ENCODE measurements at regions of chr17 and their contacts with region 1.

Region 1: GRCh38 chr17:38485146-38485468 is 56.8 kb downstream of the ARHGAP23 start:
- DNase-seq: no peak
- H3K4me3 ChIP-seq: no peak overlapping the region
- H3K27ac ChIP-seq: no peak overlapping the region
- H3K4me1 ChIP-seq: peaks cover 7% of the 10 kb centered on the region
- H3K27me3 ChIP-seq: no peaks in the 10 kb centered on the region
- CTCF ChIP-seq: no peak

Region 2: GRCh38 chr17:38421871-38422827 is 63.0 kb before region 1 on chr17:
- CTCF ChIA-PET with region 1: no interaction called
- dilution Hi-C with region 1: no loop called
- in situ Hi-C with region 1: loop called in 1 of 2 experiments (anchors 10 kb)
- intact Hi-C with region 1: loop called (anchors 2 kb)
- DNase-seq: no peak
- H3K4me3 ChIP-seq: no peak overlapping the region
- H3K27ac ChIP-seq: no peak overlapping the region
- H3K4me1 ChIP-seq: no peaks in the 10 kb centered on the region
- H3K27me3 ChIP-seq: peaks cover 15% of the 10 kb centered on the region
- CTCF ChIP-seq: no peak

Region 3: DNA sequence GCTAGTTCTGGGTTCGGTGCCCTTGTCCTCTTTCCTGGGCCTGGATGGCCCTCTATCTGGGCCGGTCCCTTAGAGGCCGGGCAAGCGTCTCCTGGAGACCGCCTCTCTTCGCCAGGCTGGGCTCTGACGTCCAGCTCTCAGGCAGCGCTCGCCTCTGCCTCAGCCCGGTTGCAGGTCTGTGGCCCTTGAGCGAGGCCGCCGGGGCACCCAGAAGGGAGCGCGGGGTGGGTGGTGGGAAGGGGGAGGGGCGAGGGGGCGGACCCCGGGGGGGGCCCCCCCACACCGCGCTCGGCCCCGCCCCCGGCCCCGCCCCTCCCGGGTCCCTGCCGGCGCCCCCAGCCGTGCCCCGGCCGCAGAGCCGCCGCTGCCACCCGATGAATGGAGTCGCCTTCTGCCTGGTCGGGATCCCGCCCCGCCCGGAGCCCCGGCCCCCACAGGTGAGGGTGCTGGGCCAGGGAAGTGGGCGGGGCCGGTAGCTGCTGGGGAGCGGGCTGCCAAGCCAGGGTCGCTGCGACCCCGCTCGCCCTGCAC is 56.9 kb before region 1 on chr17 and contains the start of gene ARHGAP23:
- CTCF ChIA-PET with region 1: no interaction called
- dilution Hi-C with region 1: no loop called
- in situ Hi-C with region 1: loop called in 1 of 2 experiments (anchors 10 kb)
- intact Hi-C with region 1: loop called (anchors 2 kb)
- DNase-seq: peak; percentile 24
- H3K4me3 ChIP-seq: peak within 1 kb of the TSS; percentile 68 to 73 (median 71)
- H3K27ac ChIP-seq: no peak within 1 kb of the TSS
- H3K4me1 ChIP-seq: peaks cover 20% of the 10 kb centered on the region
- H3K27me3 ChIP-seq: no peaks in the 10 kb centered on the region
- CTCF ChIP-seq: no peak
- total RNA-seq, gene ARHGAP23: 30.5 to 43.0 TPM

Region 4: DNA sequence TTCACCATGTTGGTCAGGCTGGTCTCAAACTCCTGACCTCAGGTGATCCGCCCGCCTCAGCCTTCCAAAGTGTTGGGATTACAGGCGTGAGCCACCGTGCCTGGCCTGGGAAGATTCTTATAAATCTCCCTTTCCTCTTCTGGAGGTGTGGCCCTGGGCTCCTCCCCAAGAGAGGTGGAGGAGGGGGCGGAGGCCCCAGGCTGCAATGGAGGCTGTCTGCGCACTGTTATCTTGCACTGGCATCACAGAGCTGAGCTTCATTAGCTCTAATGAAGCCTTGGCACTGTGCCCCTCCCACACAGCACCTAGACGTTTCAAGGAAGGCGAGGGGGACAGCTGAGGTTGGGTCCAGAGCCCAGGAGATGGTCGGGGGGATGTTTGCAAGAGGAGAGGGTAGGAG is 49.3 kb before region 1 on chr17:
- CTCF ChIA-PET with region 1: no interaction called
- dilution Hi-C with region 1: loop called (anchors 5 kb)
- in situ Hi-C with region 1: loop called in 1 of 2 experiments (anchors 5 kb)
- intact Hi-C with region 1: no loop called
- DNase-seq: no peak
- H3K4me3 ChIP-seq: no peak overlapping the region
- H3K27ac ChIP-seq: no peak overlapping the region
- H3K4me1 ChIP-seq: no peaks in the 10 kb centered on the region
- H3K27me3 ChIP-seq: no peaks in the 10 kb centered on the region
- CTCF ChIP-seq: no peak

Region 5: GRCh38 chr17:38444151-38444550 is 41.0 kb before region 1 on chr17:
- CTCF ChIA-PET with region 1: no interaction called
- dilution Hi-C with region 1: loop called (anchors 5 kb)
- in situ Hi-C with region 1: loop called in 1 of 2 experiments (anchors 5 kb)
- intact Hi-C with region 1: loop called (anchors 1 kb)
- DNase-seq: peak; percentile 54
- H3K4me3 ChIP-seq: no peak overlapping the region
- H3K27ac ChIP-seq: no peak overlapping the region
- H3K4me1 ChIP-seq: peaks cover 20% of the 10 kb centered on the region
- H3K27me3 ChIP-seq: no peaks in the 10 kb centered on the region
- CTCF ChIP-seq: peak; percentile 88 to 97

Region 6: DNA sequence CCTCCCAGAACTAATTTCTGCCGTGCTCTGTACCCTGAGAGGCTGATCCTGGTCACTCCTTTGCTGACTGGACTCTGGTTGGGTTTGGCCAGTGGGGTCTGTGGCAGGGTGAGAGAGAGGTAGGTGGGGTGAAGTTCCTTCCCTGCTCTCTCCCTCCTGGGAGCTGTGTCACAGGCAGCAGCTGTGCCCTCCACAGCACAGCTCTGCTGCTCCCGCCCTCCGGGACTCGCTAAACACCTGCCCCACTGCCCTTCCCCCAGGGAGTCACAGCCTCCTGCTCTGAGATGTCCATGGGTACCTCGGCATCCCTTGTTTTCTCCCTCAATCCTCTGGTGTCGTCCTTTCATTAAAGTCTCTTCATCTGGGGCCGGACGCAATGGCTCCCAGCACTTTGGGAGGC is 54.3 kb after region 1 on chr17:
- CTCF ChIA-PET with region 1: no interaction called
- dilution Hi-C with region 1: no loop called
- in situ Hi-C with region 1: no loop called
- intact Hi-C with region 1: loop called (anchors 5 kb)
- DNase-seq: no peak
- H3K4me3 ChIP-seq: no peak overlapping the region
- H3K27ac ChIP-seq: no peak overlapping the region
- H3K4me1 ChIP-seq: no peaks in the 10 kb centered on the region
- H3K27me3 ChIP-seq: no peaks in the 10 kb centered on the region
- CTCF ChIP-seq: no peak

Region 7: GRCh38 chr17:39294060-39294459 is 809.0 kb after region 1 on chr17:
- CTCF ChIA-PET with region 1: no interaction called
- dilution Hi-C with region 1: no loop called
- in situ Hi-C with region 1: no loop called
- intact Hi-C with region 1: no loop called
- DNase-seq: no peak
- H3K4me3 ChIP-seq: no peak overlapping the region
- H3K27ac ChIP-seq: no peak overlapping the region
- H3K4me1 ChIP-seq: no peaks in the 10 kb centered on the region
- H3K27me3 ChIP-seq: no peaks in the 10 kb centered on the region
- CTCF ChIP-seq: no peak

Measured in mammary epithelial cell (primary cell).